CD4-positive, alpha-beta memory T cell (primary cell): ENCODE measurements at regions of chr15 and their contacts with region 1.

Region 1: GRCh38 chr15:81274931-81275707 is 48.8 kb downstream of the STARD5 start:
- DNase-seq: peak; percentile 74 to 80 (median 78)
- H3K4me3 ChIP-seq: no peak overlapping the region
- H3K4me3 Mint-ChIP-seq: peak overlapping the region in 7 of 8 donors; percentile 12 to 75 (median 30)
- H3K27ac ChIP-seq: no peak overlapping the region
- H3K27ac Mint-ChIP-seq: peak overlapping the region; percentile 2 to 92 (median 70)
- H3K4me1 ChIP-seq: peaks cover 18% of the 10 kb centered on the region
- H3K4me1 Mint-ChIP-seq: peaks cover 17 to 42% (median 30%) of the 10 kb centered on the region in 4 donors
- H3K27me3 ChIP-seq: no peaks in the 10 kb centered on the region
- H3K27me3 Mint-ChIP-seq: no peaks in the 10 kb centered on the region

Region 2: DNA sequence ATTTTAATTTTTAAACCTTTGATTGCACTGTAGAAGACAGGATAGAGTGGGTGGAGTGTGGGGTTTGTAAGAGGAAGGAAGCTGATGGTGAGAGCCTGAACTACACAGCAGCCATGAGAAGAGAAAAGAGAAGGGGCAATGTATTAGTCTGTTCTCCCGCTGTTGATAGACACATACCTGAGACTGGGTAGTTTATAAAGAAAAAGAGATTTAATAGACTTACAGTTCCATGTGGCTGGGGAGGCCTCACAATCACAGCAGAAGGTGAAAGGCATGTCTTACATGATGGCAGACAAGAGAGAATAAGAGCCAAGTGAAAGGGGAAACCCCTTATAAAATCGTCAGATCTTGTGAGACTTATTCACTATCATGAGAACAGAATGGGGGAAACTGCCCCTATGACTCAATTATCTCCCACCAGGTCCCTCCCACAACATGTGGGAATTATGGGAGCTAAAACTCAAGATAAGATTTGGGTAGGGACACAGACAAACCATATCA is 11.6 kb after region 1 on chr15:
- CTCF ChIA-PET with region 1: interaction called, 60 read pairs
- POLR2A ChIA-PET with region 1: interaction called, 294 read pairs
- intact Hi-C with region 1: loop called (anchors 1 kb)
- DNase-seq: peak; percentile 57 to 62 (median 60)
- H3K4me3 ChIP-seq: peak overlapping the region in 1 of 2 donors; percentile 32
- H3K4me3 Mint-ChIP-seq: peak overlapping the region; percentile 22 to 86 (median 76)
- H3K27ac ChIP-seq: peak overlapping the region; percentile 58
- H3K27ac Mint-ChIP-seq: peak overlapping the region; percentile 93 to 99 (median 97)
- H3K4me1 ChIP-seq: peaks cover 75% of the 10 kb centered on the region
- H3K4me1 Mint-ChIP-seq: peaks cover 59 to 81% (median 71%) of the 10 kb centered on the region in 4 donors
- H3K27me3 ChIP-seq: no peaks in the 10 kb centered on the region
- H3K27me3 Mint-ChIP-seq: no peaks in the 10 kb centered on the region

Region 3: GRCh38 chr15:81301815-81302399 is 26.8 kb after region 1 on chr15:
- CTCF ChIA-PET with region 1: interaction called, 107 read pairs
- POLR2A ChIA-PET with region 1: interaction called, 294 read pairs
- intact Hi-C with region 1: loop called (anchors 2 kb)
- DNase-seq: no peak
- H3K4me3 ChIP-seq: peak overlapping the region; percentile 77 to 87
- H3K4me3 Mint-ChIP-seq: peak overlapping the region; percentile 98 to 100 (median 100)
- H3K27ac ChIP-seq: peak overlapping the region; percentile 49
- H3K27ac Mint-ChIP-seq: peak overlapping the region; percentile 88 to 98 (median 96)
- H3K4me1 ChIP-seq: peaks cover 64% of the 10 kb centered on the region
- H3K4me1 Mint-ChIP-seq: peaks cover 46 to 79% (median 53%) of the 10 kb centered on the region in 4 donors
- H3K27me3 ChIP-seq: no peaks in the 10 kb centered on the region
- H3K27me3 Mint-ChIP-seq: no peaks in the 10 kb centered on the region

Region 4: GRCh38 chr15:81323944-81324881 is 49.1 kb after region 1 on chr15 and contains the start of gene STARD5:
- CTCF ChIA-PET with region 1: interaction called, 13 read pairs
- POLR2A ChIA-PET with region 1: interaction called, 6 read pairs
- intact Hi-C with region 1: no loop called
- DNase-seq: peak; percentile 91 to 95 (median 92)
- H3K4me3 ChIP-seq: peak within 1 kb of the TSS; percentile 76 to 87
- H3K4me3 Mint-ChIP-seq: peak within 1 kb of the TSS; percentile 92 to 99 (median 96)
- H3K27ac ChIP-seq: peak within 1 kb of the TSS; percentile 55
- H3K27ac Mint-ChIP-seq: peak within 1 kb of the TSS; percentile 83 to 97 (median 94)
- H3K4me1 ChIP-seq: peaks cover 29% of the 10 kb centered on the region
- H3K4me1 Mint-ChIP-seq: peaks cover 19 to 33% (median 25%) of the 10 kb centered on the region in 4 donors
- H3K27me3 ChIP-seq: no peaks in the 10 kb centered on the region
- H3K27me3 Mint-ChIP-seq: no peaks in the 10 kb centered on the region
- total RNA-seq, gene STARD5: 5.0 to 8.0 TPM

Region 5: GRCh38 chr15:81346611-81347010 is 71.5 kb after region 1 on chr15:
- CTCF ChIA-PET with region 1: interaction called, 11 read pairs
- POLR2A ChIA-PET with region 1: no interaction called
- intact Hi-C with region 1: no loop called
- DNase-seq: no peak
- H3K4me3 ChIP-seq: no peak overlapping the region
- H3K4me3 Mint-ChIP-seq: no peak overlapping the region
- H3K27ac ChIP-seq: no peak overlapping the region
- H3K27ac Mint-ChIP-seq: no peak overlapping the region
- H3K4me1 ChIP-seq: no peaks in the 10 kb centered on the region
- H3K4me1 Mint-ChIP-seq: no peaks in the 10 kb centered on the region
- H3K27me3 ChIP-seq: no peaks in the 10 kb centered on the region
- H3K27me3 Mint-ChIP-seq: peaks cover 1 to 5% of the 10 kb centered on the region in 2 donors

Region 6: GRCh38 chr15:81394603-81395002 is 119.5 kb after region 1 on chr15:
- CTCF ChIA-PET with region 1: interaction called, 147 read pairs
- POLR2A ChIA-PET with region 1: interaction called, 7 read pairs
- intact Hi-C with region 1: no loop called
- DNase-seq: no peak
- H3K4me3 ChIP-seq: no peak overlapping the region
- H3K4me3 Mint-ChIP-seq: no peak overlapping the region
- H3K27ac ChIP-seq: no peak overlapping the region
- H3K27ac Mint-ChIP-seq: no peak overlapping the region
- H3K4me1 ChIP-seq: no peaks in the 10 kb centered on the region
- H3K4me1 Mint-ChIP-seq: no peaks in the 10 kb centered on the region
- H3K27me3 ChIP-seq: no peaks in the 10 kb centered on the region
- H3K27me3 Mint-ChIP-seq: no peaks in the 10 kb centered on the region

Region 7: GRCh38 chr15:81410318-81410753 is 135.2 kb after region 1 on chr15:
- CTCF ChIA-PET with region 1: interaction called, 13 read pairs
- POLR2A ChIA-PET with region 1: no interaction called
- intact Hi-C with region 1: no loop called
- DNase-seq: peak; percentile 38 to 61 (median 53)
- H3K4me3 ChIP-seq: no peak overlapping the region
- H3K4me3 Mint-ChIP-seq: peak overlapping the region in 1 of 8 donors; percentile 6
- H3K27ac ChIP-seq: no peak overlapping the region
- H3K27ac Mint-ChIP-seq: peak overlapping the region in 1 of 7 donors; percentile 65
- H3K4me1 ChIP-seq: peaks cover 8% of the 10 kb centered on the region
- H3K4me1 Mint-ChIP-seq: peaks cover 0 to 13% (median 11%) of the 10 kb centered on the region in 4 donors
- H3K27me3 ChIP-seq: peaks cover 5% of the 10 kb centered on the region
- H3K27me3 Mint-ChIP-seq: peaks cover 10 to 24% of the 10 kb centered on the region in 2 donors